Activated CD8-positive, alpha-beta T cell treated with anti-CD3 and anti-CD28 coated beads, Interleukin-2, amount 10 ng/mL, durations not matched to agents 7 days and 5 days (primary cell): ENCODE measurements at regions of chr4 and their contacts with region 1.

Region 1: DNA sequence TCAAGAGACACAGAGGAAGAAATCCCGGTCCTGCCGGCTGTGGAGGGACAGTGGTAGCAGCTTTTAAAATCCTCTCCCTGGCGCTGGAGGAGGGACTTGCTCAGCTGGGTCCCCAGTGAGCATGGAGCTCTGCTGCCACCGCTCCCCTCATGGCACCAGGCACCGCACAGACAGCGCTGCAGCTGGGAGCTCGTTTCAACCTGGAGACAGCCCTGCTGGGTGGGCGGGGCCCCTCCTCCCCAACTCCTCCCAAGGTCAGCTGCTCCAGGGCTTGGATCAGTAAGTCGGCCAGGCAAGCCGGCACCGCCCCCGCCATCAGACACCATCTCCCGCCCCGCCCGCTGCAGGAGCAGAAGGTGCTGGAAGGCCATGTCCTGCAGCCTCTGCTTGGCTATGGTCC is 16.4 kb downstream of the ZFYVE28 start:
- DNase-seq: peak; percentile 31
- ATAC-seq: peak; percentile 57
- H3K4me3 Mint-ChIP-seq: peak overlapping the region; percentile 57
- H3K27ac Mint-ChIP-seq: no peak overlapping the region
- H3K4me1 Mint-ChIP-seq: peaks cover 18% of the 10 kb centered on the region
- H3K27me3 Mint-ChIP-seq: peaks cover 15% of the 10 kb centered on the region

Region 2: DNA sequence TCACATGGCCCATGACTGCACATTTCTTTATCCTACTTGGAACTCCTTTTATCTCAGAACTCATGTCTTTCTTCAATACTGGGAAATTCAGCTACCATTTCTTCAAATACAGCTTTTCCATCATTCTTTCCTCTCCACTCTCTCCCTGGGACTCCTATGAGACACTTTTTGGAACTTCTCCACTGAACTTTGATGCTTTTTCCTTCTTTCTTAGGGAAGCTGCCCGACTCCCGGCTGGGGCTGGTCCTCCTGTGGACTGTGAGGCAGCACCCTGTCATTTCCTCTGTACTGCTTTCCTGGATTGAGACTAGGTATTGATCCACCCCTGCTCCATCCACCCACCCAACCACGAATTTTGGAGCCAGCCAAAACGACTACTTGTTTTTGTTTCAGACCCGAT is 23.6 kb before region 1 on chr4:
- CTCF ChIA-PET with region 1: no interaction called
- POLR2A ChIA-PET with region 1: no interaction called
- DNase-seq: no peak
- ATAC-seq: no peak
- H3K4me3 Mint-ChIP-seq: no peak overlapping the region
- H3K27ac Mint-ChIP-seq: no peak overlapping the region
- H3K4me1 Mint-ChIP-seq: no peaks in the 10 kb centered on the region
- H3K27me3 Mint-ChIP-seq: peaks cover 10% of the 10 kb centered on the region

Region 3: GRCh38 chr4:2412885-2413716 is 11.1 kb after region 1 on chr4:
- CTCF ChIA-PET with region 1: interaction called, 19 read pairs
- POLR2A ChIA-PET with region 1: interaction called, 19 read pairs
- DNase-seq: peak; percentile 95
- ATAC-seq: peak; percentile 87
- H3K4me3 Mint-ChIP-seq: peak overlapping the region; percentile 56
- H3K27ac Mint-ChIP-seq: peak overlapping the region; percentile 97
- H3K4me1 Mint-ChIP-seq: peaks cover 71% of the 10 kb centered on the region
- H3K27me3 Mint-ChIP-seq: peaks cover 29% of the 10 kb centered on the region